GM10248 (cell line): ENCODE measurements at regions of chr22 and their contacts with region 1.

Region 1: GRCh38 chr22:29245637-29246385 is 22.0 kb downstream of the RHBDD3 start:
- DNase-seq: peak; percentile 87
- CTCF ChIP-seq: peak; percentile 98

Region 2: DNA sequence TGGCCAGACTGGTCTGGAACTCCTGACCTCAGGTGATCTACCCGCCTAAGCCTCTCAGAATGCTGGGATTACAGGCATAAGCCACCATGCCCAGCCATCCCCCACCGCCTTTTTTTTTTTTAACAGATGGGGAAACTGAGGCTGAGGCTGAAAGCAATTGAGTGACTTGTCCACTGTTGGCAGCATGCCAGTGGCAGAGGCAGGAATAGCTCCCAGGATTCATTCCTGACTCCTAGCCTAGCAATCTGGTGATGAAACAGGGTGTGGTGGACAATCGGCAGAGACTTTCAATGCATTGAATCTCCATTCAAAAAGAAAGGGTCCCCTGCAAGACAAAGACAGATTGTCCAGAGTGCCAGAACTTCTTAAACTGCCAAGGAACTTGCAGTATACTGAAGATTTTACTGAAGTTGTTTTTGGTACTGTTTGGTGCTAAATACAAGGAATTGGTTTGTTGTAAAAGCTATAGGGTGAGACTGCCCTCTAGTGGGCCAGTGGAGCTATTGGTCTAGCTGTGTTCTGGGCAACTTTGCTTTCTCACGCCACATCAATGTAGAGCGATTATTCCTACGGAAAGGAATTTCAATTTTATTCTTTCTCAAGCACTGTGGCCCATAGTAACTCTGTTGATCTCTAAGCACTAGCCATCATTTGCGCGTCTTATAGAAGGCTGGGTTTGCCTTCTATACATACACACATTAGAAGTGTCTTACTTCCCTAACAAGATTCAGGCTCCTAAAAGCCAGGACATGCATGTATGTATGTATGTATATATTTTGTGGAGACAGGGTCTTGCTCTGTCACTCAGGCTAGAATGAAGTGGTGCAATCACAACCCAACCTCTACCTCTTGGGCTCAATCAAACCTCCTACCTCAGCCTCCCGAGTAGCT is 205.2 kb before region 1 on chr22:
- CTCF ChIA-PET with region 1: interaction called, 20 read pairs
- POLR2A ChIA-PET with region 1: no interaction called
- DNase-seq: peak; percentile 66
- CTCF ChIP-seq: peak; percentile 79

Region 3: DNA sequence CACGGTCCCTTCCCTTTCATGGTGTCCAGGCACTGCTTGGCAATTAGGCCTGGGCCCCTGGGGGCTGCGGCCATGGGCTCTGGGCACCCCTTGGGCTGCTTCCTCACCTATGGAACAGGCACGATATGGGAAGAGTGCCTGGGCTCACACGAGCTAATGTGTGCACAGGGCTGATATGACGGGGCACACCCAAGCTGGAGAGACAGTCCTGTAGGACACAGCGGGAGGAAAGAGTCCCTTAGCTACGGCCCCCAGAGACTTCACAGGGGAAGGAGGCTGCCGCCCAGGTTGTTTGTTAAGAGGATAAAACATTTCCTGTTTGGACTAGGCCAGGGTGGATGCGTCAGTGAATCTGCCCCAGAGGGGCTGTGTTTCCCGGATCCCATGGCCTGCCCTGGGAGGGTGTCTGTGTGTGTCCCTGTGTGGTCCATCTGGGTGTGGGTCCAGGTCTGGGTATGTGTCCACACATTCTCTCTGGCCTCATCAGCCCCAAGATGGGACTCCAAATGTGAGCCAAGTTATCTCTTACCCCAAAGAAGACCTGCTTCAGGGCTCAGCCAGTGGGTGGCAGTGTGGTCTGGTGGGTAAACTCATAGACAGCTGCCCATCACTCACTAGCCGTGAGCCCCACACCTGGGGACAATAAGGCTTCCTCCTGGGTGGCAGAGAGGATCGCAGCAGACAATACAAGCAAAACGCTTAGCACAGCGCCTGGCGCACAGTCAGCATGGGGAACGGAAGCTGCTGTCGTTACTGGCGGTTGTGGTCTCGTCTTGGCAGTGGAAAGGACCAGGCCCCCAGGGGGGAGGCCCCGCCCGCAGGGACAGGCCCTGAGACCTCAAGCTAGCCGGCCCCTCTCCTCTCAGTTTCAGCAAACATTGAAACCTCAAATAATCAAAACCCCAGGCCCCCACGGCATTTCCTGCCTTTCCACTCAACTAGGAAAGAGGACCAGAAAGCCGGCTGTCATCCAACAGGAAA is 43.3 kb before region 1 on chr22:
- CTCF ChIA-PET with region 1: interaction called, 49 read pairs
- POLR2A ChIA-PET with region 1: no interaction called
- DNase-seq: peak; percentile 91
- CTCF ChIP-seq: peak; percentile 49

Region 4: DNA sequence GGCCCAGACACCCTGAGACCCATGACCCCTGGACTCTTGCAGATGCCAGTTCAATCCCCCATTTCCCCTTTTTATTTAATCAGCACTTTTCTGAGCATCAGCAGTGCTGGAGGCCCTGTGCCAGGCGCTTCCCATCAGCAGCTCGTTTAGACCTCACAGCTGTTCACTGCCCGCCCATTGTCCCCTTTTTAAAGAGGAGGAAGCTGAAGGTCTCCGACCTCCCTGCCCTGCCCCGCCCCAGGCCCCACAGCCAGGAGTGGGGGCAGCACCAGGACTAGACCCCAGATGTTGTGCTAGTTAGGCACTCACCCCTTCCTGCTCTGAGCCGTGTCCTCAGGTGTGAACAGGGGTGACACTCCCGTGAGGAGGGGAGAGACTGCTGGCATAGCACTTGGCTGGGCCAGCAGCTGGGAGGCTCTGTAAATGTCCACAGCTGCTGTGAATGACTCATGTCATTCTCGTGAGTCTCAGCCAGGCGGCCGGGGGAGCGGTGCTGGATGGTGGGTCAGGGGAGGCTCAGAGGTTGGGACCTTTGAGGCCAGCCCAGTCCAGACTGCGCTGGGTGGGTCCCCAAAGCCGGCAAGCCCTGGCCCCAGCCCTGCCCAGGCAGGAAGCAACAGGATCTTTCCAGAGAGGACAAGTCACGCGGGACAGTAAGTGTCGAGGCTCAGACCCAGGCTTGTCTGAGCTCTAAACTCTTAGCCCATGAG is 20.2 kb before region 1 on chr22:
- CTCF ChIA-PET with region 1: interaction called, 47 read pairs
- POLR2A ChIA-PET with region 1: no interaction called
- DNase-seq: no peak
- CTCF ChIP-seq: no peak

Region 5: GRCh38 chr22:29259253-29259899 is 13.6 kb after region 1 on chr22:
- CTCF ChIA-PET with region 1: interaction called, 39 read pairs
- POLR2A ChIA-PET with region 1: no interaction called
- DNase-seq: no peak
- CTCF ChIP-seq: no peak

Region 6: DNA sequence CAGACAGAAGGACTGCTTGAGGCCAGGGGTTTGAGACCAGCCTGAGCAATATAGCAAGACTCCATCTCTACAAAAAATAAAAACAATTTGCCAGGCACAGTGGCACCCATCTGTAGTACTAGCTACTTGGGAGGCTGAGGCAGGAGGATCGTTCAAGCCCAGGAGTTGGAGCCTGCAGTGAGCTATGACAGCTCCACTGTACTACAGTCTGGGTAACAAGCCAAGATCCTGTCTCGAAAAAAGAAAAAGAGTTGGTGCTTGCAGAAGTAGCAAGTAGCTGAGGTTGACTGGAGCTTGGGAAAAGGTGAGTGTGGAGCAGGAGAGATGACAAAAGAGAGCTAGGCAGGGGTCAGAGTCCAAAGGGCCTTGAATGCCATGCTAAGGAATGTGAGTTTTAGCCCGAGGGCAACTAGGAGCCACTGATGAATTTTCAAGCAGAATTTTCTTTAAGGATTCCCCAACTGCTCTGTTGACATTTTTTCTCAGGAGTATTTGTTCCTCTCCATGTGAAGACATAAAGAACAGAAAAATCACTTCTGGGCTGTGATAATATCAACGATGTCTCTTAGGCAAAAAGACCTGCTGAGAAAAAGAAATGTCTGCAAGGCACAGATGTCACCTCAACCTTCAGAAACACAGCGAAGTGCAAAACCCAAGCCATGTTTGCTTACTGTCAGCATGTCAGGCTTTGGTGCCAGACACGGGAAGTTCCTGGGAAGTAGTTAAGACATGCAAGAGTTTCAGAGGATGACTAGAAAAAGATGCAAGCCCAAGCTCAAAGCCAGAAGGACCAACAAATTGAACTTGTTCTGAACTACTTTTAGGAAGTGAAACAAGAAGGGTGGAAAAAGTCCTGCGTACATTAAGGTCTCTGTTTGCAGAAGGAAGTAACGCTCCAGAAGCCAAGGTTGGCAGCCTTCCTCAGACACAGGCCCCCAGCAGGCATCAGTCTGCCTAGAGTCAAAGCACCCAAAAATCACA is 139.6 kb after region 1 on chr22:
- CTCF ChIA-PET with region 1: no interaction called
- POLR2A ChIA-PET with region 1: no interaction called
- DNase-seq: peak; percentile 60
- CTCF ChIP-seq: no peak

Region 7: DNA sequence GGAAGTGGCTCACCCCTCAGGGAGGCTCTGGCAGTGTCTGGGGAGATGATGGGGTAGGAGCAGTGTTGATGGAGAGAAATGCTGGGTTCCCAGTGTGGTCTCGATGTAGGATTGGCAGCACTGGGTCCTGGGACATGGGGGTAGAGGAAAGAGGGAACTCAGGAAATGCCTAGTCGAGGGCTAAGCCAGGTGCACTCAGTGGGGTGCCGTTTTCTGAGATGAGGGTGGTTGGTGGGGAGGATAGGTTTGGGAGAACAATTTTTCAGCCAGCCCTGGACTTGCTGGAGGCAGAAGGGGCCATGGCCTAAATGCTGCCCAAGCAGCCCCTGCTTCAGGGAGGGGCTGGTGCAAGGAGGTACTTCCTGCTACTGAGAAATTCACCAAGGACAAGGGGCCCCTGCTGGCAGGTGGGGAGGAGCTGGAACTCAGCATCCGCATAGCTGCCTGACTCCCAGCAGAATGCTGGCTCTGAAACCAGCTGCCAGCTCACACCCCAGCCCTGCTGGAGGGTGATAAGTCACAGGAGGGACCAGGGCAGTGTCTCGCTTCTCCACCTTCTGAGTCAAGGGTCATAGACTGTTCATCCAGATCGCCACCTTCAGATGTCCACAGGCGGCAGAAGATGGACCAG is 1117.0 kb after region 1 on chr22:
- CTCF ChIA-PET with region 1: no interaction called
- POLR2A ChIA-PET with region 1: no interaction called
- DNase-seq: no peak
- CTCF ChIP-seq: no peak